GM13976 (cell line): ENCODE measurements at regions of chr4 and their contacts with region 1.

Region 1: GRCh38 chr4:7802093-7802726 is 137.5 kb downstream of the AFAP1 start:
- DNase-seq: peak; percentile 87
- CTCF ChIP-seq: peak; percentile 96

Region 2: GRCh38 chr4:7571701-7572100 is 230.5 kb before region 1 on chr4:
- in situ Hi-C with region 1: no loop called
- DNase-seq: no peak
- CTCF ChIP-seq: no peak

Region 3: GRCh38 chr4:7766661-7767345 is 35.4 kb before region 1 on chr4:
- in situ Hi-C with region 1: loop called (anchors 5 kb)
- DNase-seq: no peak
- CTCF ChIP-seq: no peak

Region 4: DNA sequence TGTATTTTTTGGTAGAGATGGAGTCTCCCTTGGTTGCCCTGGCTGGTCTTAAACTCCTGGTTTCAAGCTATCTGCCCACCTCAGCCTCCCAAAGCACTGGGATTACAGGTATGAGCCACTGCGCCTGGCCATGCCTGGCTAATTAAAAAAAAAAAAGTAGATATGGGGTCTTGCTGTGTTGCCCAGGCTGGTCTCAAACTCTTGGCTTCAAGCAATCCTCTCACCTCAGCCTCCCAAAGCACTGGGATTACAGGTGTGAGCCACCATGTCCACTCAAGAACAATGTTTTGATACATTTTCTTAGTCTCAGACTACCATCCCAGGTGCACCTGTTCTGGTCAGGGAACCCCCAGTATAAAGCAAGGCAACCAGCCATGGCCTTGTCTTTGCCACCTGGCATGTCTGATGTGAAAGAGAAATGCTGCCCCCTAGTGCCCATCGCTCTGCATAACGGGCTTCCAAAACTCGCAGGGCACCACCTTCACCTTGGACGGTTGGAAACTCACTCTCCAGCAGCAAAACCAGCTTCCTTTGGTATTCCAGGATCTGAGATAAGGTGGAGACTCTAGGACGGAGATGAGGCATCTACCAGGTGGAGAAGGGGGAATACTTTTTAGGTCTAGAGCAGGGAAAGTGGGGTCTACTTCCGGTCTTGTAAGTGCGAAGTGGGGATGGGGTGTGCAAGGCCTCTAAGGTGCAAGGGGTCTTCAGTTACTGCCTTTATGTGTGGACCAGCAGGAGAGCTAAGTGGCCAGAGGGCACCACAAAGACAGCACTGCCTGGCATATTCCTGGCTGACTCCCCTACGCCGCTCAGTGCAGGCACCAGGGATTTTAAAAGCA is 185.2 kb after region 1 on chr4:
- in situ Hi-C with region 1: loop called (anchors 5 kb)
- DNase-seq: peak; percentile 83
- CTCF ChIP-seq: peak; percentile 79